BJ (cell line): ENCODE measurements at regions of chr19 and their contacts with region 1.

Region 1: GRCh38 chr19:3721131-3721886 is 13.1 kb downstream of the TJP3 start:
- DNase-seq: no peak
- H3K4me3 ChIP-seq: no peak overlapping the region
- H3K27me3 ChIP-seq: peaks cover 20% of the 10 kb centered on the region
- CTCF ChIP-seq: no peak

Region 2: DNA sequence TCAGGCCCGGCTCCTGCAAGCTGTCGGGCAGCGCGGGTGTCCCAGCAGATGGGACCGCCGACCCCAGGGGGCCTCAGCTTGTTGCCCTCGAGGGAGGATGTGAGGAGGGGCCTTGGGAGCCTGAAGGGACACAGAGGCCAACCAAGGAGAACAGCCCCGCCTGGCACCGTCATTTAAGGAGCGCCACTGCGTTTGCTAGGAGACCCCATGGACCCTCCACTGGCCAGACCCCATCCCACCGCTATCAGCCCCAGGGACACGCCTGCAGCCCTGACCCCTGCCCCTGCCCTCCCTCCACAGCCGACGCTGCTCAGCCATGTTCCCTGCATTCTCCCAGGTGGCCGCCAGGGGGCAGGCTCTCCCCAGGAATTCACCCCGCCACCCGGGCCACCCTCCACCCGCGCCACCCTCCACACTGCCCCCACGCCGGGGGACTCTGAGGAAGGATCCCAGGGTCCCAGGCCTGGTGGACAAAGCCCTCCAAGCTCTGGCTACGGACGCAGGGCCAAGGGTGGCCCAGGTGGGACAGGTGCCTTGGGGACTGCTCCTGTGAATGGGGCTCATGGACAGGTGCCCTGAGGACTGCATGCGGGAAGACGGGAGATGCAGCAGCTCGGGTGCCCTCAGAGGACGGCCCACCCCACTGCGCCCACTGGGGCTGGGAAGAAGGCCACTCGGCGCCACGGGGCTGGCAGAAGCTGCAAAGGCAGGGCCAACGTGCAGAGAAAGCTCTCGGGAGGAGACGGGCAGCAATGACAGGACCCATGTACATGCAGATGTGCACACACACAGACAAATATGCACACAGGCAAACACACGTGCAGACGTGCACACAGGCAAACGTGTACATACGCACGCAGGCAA is 55.4 kb before region 1 on chr19:
- CTCF ChIA-PET with region 1: interaction called, 10 read pairs
- POLR2A ChIA-PET with region 1: no interaction called
- DNase-seq: no peak
- H3K4me3 ChIP-seq: no peak overlapping the region
- H3K27me3 ChIP-seq: no peaks in the 10 kb centered on the region
- CTCF ChIP-seq: peak; percentile 94

Region 3: DNA sequence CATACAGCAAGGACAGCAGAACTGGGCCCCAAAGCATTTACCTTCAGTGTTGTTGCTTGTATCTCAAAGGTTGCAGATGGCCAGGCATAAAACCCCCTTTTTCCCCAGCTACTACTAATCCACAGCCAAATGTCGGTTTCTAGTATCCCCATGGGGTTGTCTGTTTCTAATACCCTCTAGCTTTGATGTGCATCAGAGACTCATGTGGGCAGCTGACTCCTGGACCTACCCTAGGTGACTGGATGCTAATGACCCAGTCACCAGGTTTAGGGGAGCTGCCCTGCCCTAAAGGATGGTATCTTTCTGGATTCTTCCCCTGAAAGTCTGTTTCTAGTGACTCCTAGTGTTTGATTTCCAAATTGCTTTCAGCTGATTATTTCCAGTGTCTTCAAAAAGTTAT is 10.8 kb after region 1 on chr19:
- CTCF ChIA-PET with region 1: interaction called, 12 read pairs
- POLR2A ChIA-PET with region 1: no interaction called
- DNase-seq: no peak
- H3K4me3 ChIP-seq: no peak overlapping the region
- H3K27me3 ChIP-seq: no peaks in the 10 kb centered on the region
- CTCF ChIP-seq: no peak